Astrocyte of the cerebellum (primary cell): ENCODE measurements at regions of chr10 and their contacts with region 1.

Region 1: DNA sequence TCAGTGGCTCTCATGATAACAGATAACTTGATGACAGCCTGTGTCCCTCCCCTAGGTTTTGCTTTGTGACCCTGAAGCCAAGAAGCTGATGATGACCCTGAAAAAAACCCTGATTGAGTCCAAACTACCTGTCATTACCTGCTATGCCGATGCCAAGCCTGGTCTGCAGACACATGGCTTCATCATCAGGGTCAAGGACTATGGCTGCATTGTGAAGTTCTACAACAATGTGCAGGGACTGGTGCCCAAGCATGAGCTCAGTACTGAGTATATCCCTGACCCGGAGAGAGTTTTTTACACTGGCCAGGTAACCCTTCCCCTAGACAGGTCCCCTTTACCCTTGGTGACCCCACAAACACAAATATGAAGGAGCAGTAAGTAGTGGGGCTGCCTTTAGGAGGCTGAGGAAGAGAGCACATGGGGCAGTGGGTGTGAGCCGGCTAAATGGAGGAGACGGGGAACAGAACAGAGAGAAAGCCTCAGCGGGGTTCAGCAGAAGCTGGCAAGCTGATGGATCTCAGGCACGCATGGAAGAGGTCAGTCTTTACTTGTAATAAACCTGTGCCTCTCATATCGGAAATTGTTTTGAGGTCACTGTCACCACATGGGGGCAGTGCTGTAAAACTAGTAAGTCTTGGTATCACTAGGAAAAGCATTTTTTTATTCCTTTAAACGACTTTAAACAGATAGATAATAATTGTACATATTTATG is 20.2 kb downstream of the PDCD11 start:
- DNase-seq: peak; percentile 50
- H3K4me3 ChIP-seq: no peak overlapping the region
- CTCF ChIP-seq: peak; percentile 48

Region 2: GRCh38 chr10:103192451-103193106 is 224.0 kb before region 1 on chr10:
- in situ Hi-C with region 1: no loop called
- DNase-seq: peak; percentile 61
- H3K4me3 ChIP-seq: peak overlapping the region; percentile 86
- CTCF ChIP-seq: no peak

Region 3: DNA sequence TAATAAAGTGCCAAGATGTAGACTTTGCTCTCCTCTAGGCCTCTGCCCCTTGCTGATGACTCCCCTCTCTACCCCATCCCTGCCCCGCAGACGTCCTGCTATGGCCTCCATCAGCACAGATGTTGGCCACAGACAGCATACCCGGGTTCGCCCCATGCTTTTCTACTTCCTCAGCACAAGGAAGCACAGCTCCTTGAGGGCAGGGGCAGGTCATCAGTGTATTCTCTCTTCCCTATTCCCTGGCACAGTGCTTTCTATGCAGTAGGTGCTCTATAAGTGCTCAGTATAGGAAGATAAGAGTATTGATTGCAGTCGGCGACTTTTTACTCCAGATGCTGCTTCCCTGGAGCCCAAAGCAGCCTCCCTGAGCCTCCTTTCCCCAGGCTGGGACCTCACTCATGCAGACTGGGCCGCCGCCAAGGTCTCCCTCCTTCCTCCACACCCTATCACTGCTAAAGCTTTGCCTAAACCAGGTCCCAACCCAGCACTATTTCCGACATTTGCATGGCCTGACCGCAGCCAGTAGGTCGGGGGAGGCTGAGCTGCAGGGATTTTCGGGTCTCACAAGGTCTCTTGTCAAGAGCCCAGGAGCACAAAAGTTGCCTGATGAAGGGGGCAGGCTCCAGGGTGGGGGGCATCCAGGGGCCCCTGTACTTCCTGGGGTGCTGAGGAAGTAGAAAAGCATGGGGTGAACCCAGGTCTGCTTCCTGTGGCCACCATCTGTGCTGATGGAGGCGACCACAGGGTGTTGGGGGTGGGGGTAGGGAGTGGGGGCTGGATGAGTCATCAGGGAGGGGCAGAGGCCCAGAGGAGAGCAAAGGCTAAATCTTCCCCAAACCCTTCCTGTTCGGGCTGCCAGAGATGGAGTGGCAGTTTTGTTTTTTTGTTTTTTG is 54.4 kb after region 1 on chr10:
- in situ Hi-C with region 1: loop called (anchors 10 kb)
- DNase-seq: no peak
- H3K4me3 ChIP-seq: no peak overlapping the region
- CTCF ChIP-seq: no peak